ENCODE measurements at regions of chr5 and their contacts with region 1.

Region 1: GRCh38 chr5:71887680-71888079 is 168.6 kb downstream of the CARTPT start:
- DNase-seq: no peak
- ATAC-seq: peak in 3 of 4 donors; percentile 36 to 65 (median 51)
- H3K4me3 ChIP-seq: no peak overlapping the region
- H3K27ac ChIP-seq: peak overlapping the region in 6 of 12 donors; percentile 28 to 45 (median 37)
- H3K4me1 ChIP-seq: peaks cover 0 to 31% (median 14%) of the 10 kb centered on the region in 12 donors
- H3K27me3 ChIP-seq: no peaks in the 10 kb centered on the region
- CTCF ChIP-seq: no peak
- POLR2A ChIP-seq: no peak

Region 2: DNA sequence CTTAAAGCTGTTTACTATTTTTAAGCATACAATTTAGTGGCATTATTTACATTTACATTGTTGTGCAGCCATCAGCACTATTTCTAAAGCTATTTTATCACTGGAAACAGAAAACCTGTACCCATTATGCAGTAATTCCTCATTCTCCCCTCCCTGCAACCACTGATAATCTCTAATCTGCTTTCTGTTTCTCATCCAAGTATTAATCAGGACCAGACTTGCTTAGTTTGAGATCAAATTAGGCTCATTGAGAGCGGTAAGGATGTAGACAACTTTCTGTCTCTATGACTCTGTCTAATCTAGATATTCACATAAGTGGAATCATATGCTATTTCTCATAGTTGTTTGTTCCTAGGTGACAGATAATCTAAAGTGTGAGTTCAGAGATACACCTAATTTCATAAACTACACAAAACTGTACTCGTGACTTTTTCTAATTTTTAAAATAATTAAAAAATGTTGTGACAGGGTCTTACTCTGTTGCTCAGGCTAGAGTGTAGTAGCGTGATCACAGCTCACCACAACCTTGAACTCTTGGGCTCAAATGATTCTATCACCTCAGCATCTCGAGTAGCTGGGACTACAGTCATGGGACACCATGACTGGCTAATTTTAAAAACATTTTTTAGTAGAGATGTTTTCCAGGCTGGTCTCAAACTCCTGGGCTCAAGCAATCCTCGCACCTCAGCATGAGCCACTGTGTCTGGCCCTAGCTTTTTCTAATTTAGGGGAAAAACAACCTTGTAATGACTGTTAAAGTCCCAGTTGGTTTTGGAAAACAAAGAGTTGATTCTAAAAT is 394.7 kb before region 1 on chr5:
- intact Hi-C with region 1: no loop called
- DNase-seq: no peak
- ATAC-seq: no peak
- H3K4me3 ChIP-seq: no peak overlapping the region
- H3K27ac ChIP-seq: no peak overlapping the region
- H3K4me1 ChIP-seq: no peaks in the 10 kb centered on the region
- H3K27me3 ChIP-seq: no peaks in the 10 kb centered on the region
- CTCF ChIP-seq: no peak
- POLR2A ChIP-seq: no peak

Region 3: DNA sequence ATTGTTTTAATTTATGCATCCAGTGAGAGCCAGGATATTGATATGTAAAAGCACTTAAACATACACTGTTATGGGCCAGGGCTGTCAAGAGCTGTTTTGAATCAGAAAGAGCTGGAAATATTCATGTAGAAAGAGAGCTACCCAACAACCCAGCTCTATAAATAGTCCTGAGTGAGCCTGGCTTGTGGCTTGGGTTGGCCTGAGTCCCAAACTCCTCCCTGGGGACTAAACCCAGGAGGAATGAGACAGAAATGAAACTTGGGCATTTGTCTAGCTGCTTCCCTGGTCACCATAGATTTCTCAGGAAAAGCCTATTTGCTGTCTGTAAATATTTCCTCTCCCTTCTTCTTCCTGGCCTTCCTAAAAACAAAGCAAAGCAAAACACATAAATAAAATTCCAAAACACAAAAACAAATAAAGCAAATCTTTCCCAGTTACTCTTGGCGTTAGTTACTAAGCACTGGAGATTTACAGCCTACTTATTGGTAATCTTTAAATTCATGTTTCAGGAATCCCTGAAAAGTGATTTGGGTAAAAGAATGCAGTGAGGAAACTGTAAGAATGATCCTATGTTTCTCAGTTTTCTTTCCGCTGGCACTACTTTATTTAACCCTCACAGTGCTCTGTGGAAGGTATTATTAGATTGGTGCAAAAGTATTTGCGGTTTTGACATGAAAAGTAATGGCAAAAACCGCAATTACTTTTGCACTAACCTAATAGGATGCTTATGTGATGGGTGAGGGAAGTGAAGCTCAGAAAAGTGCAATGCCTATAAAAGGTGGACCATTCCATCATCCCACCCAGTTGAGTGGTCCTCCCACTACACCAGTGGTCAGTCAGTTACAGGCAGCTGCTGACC is 56.8 kb before region 1 on chr5:
- intact Hi-C with region 1: loop called in 3 of 10 experiments (anchors 5 to 10 kb)
- DNase-seq: peak; percentile 75 to 84 (median 83)
- ATAC-seq: peak; percentile 90 to 96 (median 94)
- H3K4me3 ChIP-seq: no peak overlapping the region
- H3K27ac ChIP-seq: peak overlapping the region; percentile 33 to 79 (median 62)
- H3K4me1 ChIP-seq: peaks cover 0 to 24% (median 13%) of the 10 kb centered on the region in 12 donors
- H3K27me3 ChIP-seq: no peaks in the 10 kb centered on the region
- CTCF ChIP-seq: no peak
- POLR2A ChIP-seq: no peak

Region 4: DNA sequence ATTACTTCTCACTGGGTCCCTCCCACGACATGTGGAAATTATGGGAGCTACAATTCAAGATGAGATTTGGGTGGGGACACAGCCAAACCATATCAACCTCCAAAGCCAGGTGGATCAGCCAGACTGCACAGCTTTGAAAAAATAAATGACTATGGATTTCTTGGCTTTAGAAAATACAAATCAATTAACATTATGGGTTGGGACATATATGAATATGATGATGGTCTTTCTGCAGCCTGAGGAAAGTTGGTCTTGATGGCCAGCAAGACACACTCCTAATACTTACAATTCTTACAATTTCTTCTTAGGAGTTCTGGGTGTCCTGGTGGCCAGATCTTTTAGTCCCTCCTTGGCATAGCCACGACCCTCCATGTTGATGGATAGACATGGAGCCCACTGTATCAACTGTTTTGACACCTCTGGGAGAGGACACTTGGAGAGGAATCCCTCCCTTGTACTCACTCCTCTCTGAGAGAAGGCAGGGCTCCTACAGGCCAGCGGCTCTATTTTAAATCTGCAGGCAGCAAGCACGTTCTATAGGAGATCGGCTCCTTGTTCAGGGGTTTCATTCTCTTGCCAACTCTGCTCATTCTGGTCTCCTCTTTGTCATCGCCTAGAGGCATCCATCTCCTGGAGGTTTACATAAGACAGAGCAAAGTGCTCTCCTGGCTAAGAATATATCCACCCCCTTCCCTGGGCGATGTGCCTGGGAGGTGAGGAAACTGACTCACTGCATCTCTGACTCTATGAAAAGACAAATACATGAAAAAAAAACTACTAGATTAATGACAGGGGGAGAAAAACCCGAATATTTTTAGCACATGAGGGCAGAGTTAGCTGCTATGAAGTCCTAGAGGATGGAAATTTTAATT is 22.7 kb before region 1 on chr5:
- intact Hi-C with region 1: no loop called
- DNase-seq: no peak
- ATAC-seq: peak in 3 of 4 donors; percentile 36 to 87 (median 70)
- H3K4me3 ChIP-seq: no peak overlapping the region
- H3K27ac ChIP-seq: no peak overlapping the region
- H3K4me1 ChIP-seq: peaks cover 0 to 10% (median 0%) of the 10 kb centered on the region in 12 donors
- H3K27me3 ChIP-seq: no peaks in the 10 kb centered on the region
- CTCF ChIP-seq: no peak
- POLR2A ChIP-seq: no peak

Region 5: DNA sequence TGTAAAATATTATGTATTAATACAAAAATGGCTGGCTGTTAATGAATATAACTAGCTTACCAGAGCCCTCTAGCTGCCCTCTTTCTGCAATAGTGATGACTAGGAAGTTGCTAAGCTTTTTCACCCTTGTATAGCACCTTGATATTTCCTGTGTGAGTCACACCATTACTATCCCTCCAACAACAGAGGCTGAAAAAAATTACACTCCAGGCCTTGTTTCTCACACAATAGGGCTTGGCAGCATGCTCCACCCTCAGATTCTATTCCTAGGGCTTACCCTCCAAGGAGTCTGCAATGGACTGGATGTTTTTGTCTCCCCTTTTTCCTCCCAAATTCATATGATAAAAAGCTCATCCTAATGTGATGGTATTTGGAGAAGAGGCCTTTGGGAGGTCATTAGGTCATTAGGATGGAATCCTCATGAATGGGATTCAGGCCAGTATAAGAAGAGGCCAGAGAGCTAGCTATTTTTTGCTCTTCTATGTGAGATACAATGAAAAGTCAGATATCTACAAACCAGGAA is 35.0 kb after region 1 on chr5:
- intact Hi-C with region 1: loop called in 1 of 10 experiments (anchors 5 kb)
- DNase-seq: no peak
- ATAC-seq: peak; percentile 62 to 83 (median 71)
- H3K4me3 ChIP-seq: no peak overlapping the region
- H3K27ac ChIP-seq: peak overlapping the region in 11 of 12 donors; percentile 22 to 80 (median 56)
- H3K4me1 ChIP-seq: peaks cover 0 to 39% (median 20%) of the 10 kb centered on the region in 12 donors
- H3K27me3 ChIP-seq: no peaks in the 10 kb centered on the region
- CTCF ChIP-seq: peak in 5 of 12 donors; percentile 11 to 41 (median 34)
- POLR2A ChIP-seq: no peak

Region 6: GRCh38 chr5:72108202-72109061 is 220.8 kb after region 1 on chr5:
- intact Hi-C with region 1: loop called in 1 of 10 experiments (anchors 10 kb)
- DNase-seq: peak; percentile 82 to 88 (median 84)
- ATAC-seq: peak; percentile 73 to 85 (median 83)
- H3K4me3 ChIP-seq: peak overlapping the region; percentile 53 to 95 (median 88)
- H3K27ac ChIP-seq: peak overlapping the region; percentile 74 to 93 (median 87)
- H3K4me1 ChIP-seq: peaks cover 0 to 46% (median 16%) of the 10 kb centered on the region in 12 donors
- H3K27me3 ChIP-seq: peaks cover 0 to 37% (median 0%) of the 10 kb centered on the region in 9 donors
- CTCF ChIP-seq: no peak
- POLR2A ChIP-seq: peak in 1 of 2 donors; percentile 6